Stomach (tissue), 19 donors: ENCODE measurements at regions of chr18 and their contacts with region 1.

Region 1: DNA sequence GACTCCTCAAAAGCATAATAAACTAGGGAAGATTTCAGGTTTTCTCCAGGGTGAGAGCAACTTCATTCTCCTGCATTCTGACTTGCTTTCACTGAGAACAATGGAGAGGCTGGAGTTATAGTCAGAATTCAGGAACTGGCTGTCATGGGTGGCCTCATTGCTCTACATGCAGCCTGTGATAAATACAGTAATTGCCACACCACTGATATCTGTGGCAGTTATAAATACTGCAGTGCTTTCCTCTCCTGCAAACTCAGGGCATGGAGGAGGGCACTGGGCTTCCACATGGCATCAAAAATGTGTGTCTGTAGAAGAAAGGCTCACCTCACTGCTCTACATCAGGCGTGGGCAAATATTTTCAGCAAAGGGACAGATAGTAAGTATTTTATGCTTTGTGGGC is 510.2 kb downstream of the ZNF516 start:
- DNase-seq: no peak
- H3K4me3 ChIP-seq: no peak overlapping the region
- H3K27ac ChIP-seq: no peak overlapping the region
- H3K4me1 ChIP-seq: no peaks in the 10 kb centered on the region
- H3K27me3 ChIP-seq: no peaks in the 10 kb centered on the region
- CTCF ChIP-seq: no peak
- EP300 ChIP-seq: no peak
- POLR2A ChIP-seq: no peak

Region 2: GRCh38 chr18:75904416-75904815 is 80.4 kb before region 1 on chr18:
- intact Hi-C with region 1: loop called (anchors 10 kb)
- DNase-seq: no peak
- H3K4me3 ChIP-seq: no peak overlapping the region
- H3K27ac ChIP-seq: no peak overlapping the region
- H3K4me1 ChIP-seq: no peaks in the 10 kb centered on the region
- H3K27me3 ChIP-seq: no peaks in the 10 kb centered on the region
- CTCF ChIP-seq: no peak
- EP300 ChIP-seq: no peak
- POLR2A ChIP-seq: no peak